Activated CD8-positive, alpha-beta T cell treated with anti-CD3 and anti-CD28 coated beads, Interleukin-2, amount 10 ng/mL, durations not matched to agents 7 days and 5 days (primary cell): ENCODE measurements at regions of chr7 and their contacts with region 1.

Region 1: GRCh38 chr7:27745064-27745583 is 5.2 kb downstream of the TAX1BP1 start:
- DNase-seq: no peak
- ATAC-seq: no peak
- H3K4me3 Mint-ChIP-seq: no peak overlapping the region
- H3K27ac Mint-ChIP-seq: no peak overlapping the region
- H3K4me1 Mint-ChIP-seq: peaks cover 26% of the 10 kb centered on the region
- H3K27me3 Mint-ChIP-seq: no peaks in the 10 kb centered on the region

Region 2: DNA sequence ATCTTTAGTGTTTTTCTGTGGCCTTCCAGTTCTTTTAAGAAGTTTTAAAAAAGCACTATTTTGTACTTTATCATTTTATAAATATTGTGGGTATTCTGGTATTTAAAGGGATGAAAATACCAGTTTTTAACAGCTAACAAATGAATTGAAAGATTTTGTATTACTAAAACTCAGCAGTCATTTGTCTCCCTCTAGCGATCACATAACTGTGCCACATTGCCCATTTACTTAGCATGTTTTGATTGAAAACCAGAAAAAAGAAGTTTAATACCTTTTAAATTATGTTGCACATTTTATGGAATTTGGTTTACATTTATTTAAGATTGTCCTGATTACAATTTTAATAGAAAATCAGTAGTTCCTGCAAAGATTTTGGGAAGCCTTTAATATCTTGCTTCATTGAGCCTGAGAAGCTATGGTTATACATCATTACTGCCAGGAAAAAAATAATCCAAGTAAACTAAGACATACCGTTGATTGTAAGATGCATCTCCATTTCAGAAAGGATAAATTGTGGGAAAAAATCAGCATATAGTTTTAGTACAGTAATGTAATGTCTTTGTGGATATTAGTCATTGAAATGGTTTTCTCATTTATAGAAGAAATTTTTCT is 29.7 kb after region 1 on chr7:
- CTCF ChIA-PET with region 1: interaction called, 12 read pairs
- POLR2A ChIA-PET with region 1: no interaction called
- DNase-seq: no peak
- ATAC-seq: no peak
- H3K4me3 Mint-ChIP-seq: no peak overlapping the region
- H3K27ac Mint-ChIP-seq: no peak overlapping the region
- H3K4me1 Mint-ChIP-seq: no peaks in the 10 kb centered on the region
- H3K27me3 Mint-ChIP-seq: no peaks in the 10 kb centered on the region

Region 3: DNA sequence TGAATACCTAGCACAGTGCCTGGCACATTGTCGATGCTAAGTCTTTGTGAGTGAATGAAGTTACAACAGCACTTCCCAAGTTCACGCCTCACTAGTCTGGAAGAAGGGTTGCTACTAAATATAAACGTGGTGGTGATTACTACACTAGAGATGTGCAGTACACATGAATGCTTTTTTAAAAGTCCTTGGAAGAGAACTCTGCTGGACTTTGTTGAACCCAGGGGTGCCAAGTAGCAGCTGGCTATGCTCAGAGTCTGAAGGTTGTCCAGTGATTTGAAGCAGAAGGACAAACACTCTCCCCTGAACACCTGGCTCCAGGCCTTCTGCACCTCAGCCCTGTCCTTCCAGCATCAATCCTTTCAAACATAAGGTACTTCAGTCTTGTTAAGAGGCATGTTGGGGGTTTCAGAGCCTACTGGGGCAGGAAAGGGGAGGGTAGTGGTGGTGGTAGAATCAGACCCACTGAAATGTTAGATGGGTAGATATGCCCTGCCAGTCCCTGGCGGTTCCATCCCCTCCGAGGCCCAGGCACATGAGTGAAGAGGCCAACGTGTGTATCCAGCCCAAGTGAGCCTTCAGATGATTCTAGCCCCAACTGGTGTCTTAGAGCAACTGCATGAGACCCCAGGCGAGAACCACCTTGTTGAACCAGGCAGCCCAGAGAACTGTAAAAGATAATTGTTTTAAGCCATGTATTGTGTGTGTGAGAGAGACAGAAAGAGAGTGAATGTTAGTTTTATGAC is 89.2 kb after region 1 on chr7:
- CTCF ChIA-PET with region 1: no interaction called
- POLR2A ChIA-PET with region 1: no interaction called
- DNase-seq: no peak
- ATAC-seq: no peak
- H3K4me3 Mint-ChIP-seq: no peak overlapping the region
- H3K27ac Mint-ChIP-seq: no peak overlapping the region
- H3K4me1 Mint-ChIP-seq: no peaks in the 10 kb centered on the region
- H3K27me3 Mint-ChIP-seq: no peaks in the 10 kb centered on the region